ENCODE measurements at regions of chr5 and their contacts with region 1.

Region 1: DNA sequence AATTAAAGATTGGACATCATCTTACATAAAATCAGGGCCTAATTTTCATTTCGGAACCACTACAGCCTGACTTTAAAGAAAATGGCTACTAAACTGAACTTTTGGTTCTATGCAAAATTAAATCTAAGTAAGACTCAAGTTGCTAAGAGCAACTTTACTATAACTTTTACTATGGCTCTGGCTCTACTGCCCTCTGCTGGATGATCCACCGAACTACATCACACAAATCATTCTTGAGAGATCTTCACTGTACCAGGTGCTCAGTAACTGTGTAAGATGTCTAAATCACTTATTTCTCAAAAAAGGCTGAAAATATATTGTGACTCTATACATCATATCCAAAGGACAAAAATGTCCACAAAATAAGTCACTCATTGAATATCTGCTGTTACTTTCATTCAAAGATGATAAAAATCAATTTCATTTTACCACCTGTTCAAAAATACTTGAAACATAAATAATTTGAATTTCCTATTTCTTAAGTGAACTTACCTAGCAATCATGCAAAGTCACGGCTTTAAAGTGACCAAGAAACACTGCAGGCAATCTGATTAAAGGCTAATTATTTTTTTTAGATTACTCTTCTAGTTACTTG is 13.5 kb downstream of the MOCS2 start:
- DNase-seq: peak; percentile 86
- ATAC-seq: peak; percentile 71
- H3K4me3 Mint-ChIP-seq: no peak overlapping the region
- H3K27ac Mint-ChIP-seq: no peak overlapping the region
- H3K4me1 Mint-ChIP-seq: peaks cover 22% of the 10 kb centered on the region
- H3K27me3 Mint-ChIP-seq: no peaks in the 10 kb centered on the region

Region 2: GRCh38 chr5:52989781-52990527 is 106.1 kb before region 1 on chr5:
- CTCF ChIA-PET with region 1: interaction called, 25 read pairs
- POLR2A ChIA-PET with region 1: no interaction called
- DNase-seq: peak; percentile 56
- ATAC-seq: peak; percentile 63
- H3K4me3 Mint-ChIP-seq: peak overlapping the region; percentile 78
- H3K27ac Mint-ChIP-seq: peak overlapping the region; percentile 33
- H3K4me1 Mint-ChIP-seq: peaks cover 30% of the 10 kb centered on the region
- H3K27me3 Mint-ChIP-seq: peaks cover 32% of the 10 kb centered on the region

Region 3: DNA sequence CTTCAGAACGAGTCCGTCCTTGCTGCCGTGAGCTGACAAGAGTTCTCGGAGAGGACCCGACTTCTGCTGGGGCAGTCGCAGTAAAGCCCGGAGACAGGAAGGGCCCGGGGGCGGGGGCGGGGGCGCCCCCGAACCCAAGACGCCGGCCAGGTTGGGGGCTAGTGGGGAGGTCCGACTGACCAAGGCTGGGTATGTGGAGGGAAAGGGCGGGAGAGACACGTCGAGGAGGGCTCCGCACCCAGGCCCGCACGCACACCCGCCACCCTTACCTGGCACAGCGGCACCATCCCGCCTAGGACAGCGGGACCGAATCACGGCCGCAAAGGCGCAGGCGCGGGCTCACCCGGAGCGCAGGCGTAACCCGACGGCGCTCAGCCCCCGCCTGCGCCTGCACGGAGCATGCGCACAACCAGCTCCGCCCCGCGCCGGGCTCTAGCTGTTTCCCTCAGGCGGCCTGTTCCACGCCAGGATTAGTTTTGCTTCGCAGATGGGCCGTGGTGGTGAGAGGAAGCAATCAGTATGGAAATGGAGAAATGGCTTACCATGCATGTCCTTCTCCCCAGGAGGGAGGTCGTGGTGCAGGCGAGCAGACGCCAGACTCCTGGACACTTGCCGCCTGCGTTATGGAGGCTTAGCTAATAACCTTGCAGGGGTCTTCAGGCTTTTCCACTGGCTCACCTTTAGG is 13.6 kb after region 1 on chr5 and contains the start of gene MOCS2:
- CTCF ChIA-PET with region 1: interaction called, 18 read pairs
- POLR2A ChIA-PET with region 1: interaction called, 3 read pairs
- DNase-seq: peak; percentile 92
- ATAC-seq: peak; percentile 99
- H3K4me3 Mint-ChIP-seq: peak within 1 kb of the TSS; percentile 93
- H3K27ac Mint-ChIP-seq: peak within 1 kb of the TSS; percentile 87
- H3K4me1 Mint-ChIP-seq: peaks cover 42% of the 10 kb centered on the region
- H3K27me3 Mint-ChIP-seq: no peaks in the 10 kb centered on the region
- total RNA-seq, gene MOCS2: 30.7 TPM